ENCODE measurements at regions of chr1 and their contacts with region 1.

Region 1: GRCh38 chr1:45499415-45499769 is 481 bp downstream of the CCDC163 start:
- DNase-seq: peak; percentile 40
- H3K4me3 Mint-ChIP-seq: peak overlapping the region; percentile 88
- H3K27ac Mint-ChIP-seq: peak overlapping the region; percentile 77
- H3K4me1 Mint-ChIP-seq: peaks cover 36% of the 10 kb centered on the region
- H3K27me3 Mint-ChIP-seq: no peaks in the 10 kb centered on the region

Region 2: GRCh38 chr1:45512641-45513054 is 13.3 kb after region 1 on chr1:
- CTCF ChIA-PET with region 1: interaction called, 23 read pairs
- POLR2A ChIA-PET with region 1: interaction called, 6 read pairs
- DNase-seq: peak; percentile 68
- H3K4me3 Mint-ChIP-seq: no peak overlapping the region
- H3K27ac Mint-ChIP-seq: peak overlapping the region; percentile 47
- H3K4me1 Mint-ChIP-seq: peaks cover 19% of the 10 kb centered on the region
- H3K27me3 Mint-ChIP-seq: no peaks in the 10 kb centered on the region

Region 3: GRCh38 chr1:45583264-45583665 is 83.9 kb after region 1 on chr1:
- CTCF ChIA-PET with region 1: interaction called, 6 read pairs
- POLR2A ChIA-PET with region 1: interaction called, 38 read pairs
- DNase-seq: peak; percentile 96
- H3K4me3 Mint-ChIP-seq: peak overlapping the region; percentile 88
- H3K27ac Mint-ChIP-seq: peak overlapping the region; percentile 98
- H3K4me1 Mint-ChIP-seq: peaks cover 29% of the 10 kb centered on the region
- H3K27me3 Mint-ChIP-seq: no peaks in the 10 kb centered on the region

Region 4: GRCh38 chr1:46102769-46103476 is 603.5 kb after region 1 on chr1:
- CTCF ChIA-PET with region 1: no interaction called
- POLR2A ChIA-PET with region 1: no interaction called
- DNase-seq: no peak
- H3K4me3 Mint-ChIP-seq: no peak overlapping the region
- H3K27ac Mint-ChIP-seq: no peak overlapping the region
- H3K4me1 Mint-ChIP-seq: peaks cover 7% of the 10 kb centered on the region
- H3K27me3 Mint-ChIP-seq: peaks cover 3% of the 10 kb centered on the region

Measured in activated CD4-positive, alpha-beta memory T cell treated with anti-CD3 and anti-CD28 coated beads, Interleukin-2, amount 10 ng/mL, durations not matched to agents 7 days and 5 days (primary cell).